PC-3 (cell line): ENCODE measurements at regions of chr10 and their contacts with region 1.

Region 1: GRCh38 chr10:78310481-78311080 is 276.9 kb downstream of the RPS24 start:
- DNase-seq: no peak
- ATAC-seq: no peak
- H3K4me3 ChIP-seq: no peak overlapping the region
- H3K27ac ChIP-seq: no peak overlapping the region
- H3K4me1 ChIP-seq: no peaks in the 10 kb centered on the region
- H3K27me3 ChIP-seq: peaks cover 68% of the 10 kb centered on the region
- CTCF ChIP-seq: no peak

Region 2: GRCh38 chr10:78211561-78212051 is 99.0 kb before region 1 on chr10:
- CTCF ChIA-PET with region 1: interaction called, 3 read pairs
- POLR2A ChIA-PET with region 1: no interaction called
- intact Hi-C with region 1: loop called (anchors 1 kb)
- DNase-seq: peak; percentile 92
- ATAC-seq: peak; percentile 66
- H3K4me3 ChIP-seq: no peak overlapping the region
- H3K27ac ChIP-seq: no peak overlapping the region
- H3K4me1 ChIP-seq: no peaks in the 10 kb centered on the region
- H3K27me3 ChIP-seq: peaks cover 69% of the 10 kb centered on the region
- CTCF ChIP-seq: peak; percentile 100

Region 3: DNA sequence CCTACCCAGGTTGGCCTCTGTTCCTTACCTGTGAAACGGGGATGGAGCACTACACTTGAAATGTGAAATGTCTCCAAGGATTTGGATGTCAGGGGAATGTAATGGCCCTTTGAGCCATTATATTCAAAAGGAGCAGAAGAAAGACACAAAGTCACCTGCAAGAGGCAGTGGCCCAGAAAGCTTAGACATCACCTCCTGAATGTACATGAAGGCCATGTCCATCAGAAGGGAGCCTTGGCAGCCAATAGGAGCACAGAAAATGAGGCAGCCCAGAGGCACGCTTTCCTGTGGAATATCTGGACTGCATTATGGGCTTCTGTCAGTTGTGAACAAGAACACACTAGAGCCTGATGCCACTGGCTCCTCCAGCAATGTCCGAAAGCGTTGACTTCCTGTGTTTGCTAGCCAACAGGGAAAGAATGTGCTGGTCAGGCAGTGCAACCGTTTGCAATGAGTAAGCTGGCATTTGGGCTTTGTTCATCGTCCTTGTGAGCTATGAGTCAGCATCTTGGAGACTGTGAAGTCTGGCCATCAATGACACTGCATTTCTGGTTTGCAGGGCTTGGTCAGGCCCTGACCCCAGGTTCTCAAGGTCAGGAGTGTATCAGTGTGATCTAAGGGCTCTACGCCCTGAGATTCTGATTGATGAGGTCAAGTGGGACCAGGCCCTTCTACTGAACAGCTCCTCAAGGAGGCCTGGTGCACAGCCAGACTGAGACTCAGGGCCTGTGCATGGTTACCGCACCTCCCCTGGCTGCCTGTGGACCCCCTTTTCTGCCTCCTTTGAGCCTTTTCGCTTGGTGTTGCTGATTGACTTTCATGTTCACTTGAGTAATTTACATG is 54.6 kb before region 1 on chr10:
- CTCF ChIA-PET with region 1: no interaction called
- POLR2A ChIA-PET with region 1: no interaction called
- intact Hi-C with region 1: no loop called
- DNase-seq: peak; percentile 100
- ATAC-seq: peak; percentile 97
- H3K4me3 ChIP-seq: no peak overlapping the region
- H3K27ac ChIP-seq: peak overlapping the region; percentile 73
- H3K4me1 ChIP-seq: peaks cover 20% of the 10 kb centered on the region
- H3K27me3 ChIP-seq: no peaks in the 10 kb centered on the region
- CTCF ChIP-seq: no peak

Region 4: DNA sequence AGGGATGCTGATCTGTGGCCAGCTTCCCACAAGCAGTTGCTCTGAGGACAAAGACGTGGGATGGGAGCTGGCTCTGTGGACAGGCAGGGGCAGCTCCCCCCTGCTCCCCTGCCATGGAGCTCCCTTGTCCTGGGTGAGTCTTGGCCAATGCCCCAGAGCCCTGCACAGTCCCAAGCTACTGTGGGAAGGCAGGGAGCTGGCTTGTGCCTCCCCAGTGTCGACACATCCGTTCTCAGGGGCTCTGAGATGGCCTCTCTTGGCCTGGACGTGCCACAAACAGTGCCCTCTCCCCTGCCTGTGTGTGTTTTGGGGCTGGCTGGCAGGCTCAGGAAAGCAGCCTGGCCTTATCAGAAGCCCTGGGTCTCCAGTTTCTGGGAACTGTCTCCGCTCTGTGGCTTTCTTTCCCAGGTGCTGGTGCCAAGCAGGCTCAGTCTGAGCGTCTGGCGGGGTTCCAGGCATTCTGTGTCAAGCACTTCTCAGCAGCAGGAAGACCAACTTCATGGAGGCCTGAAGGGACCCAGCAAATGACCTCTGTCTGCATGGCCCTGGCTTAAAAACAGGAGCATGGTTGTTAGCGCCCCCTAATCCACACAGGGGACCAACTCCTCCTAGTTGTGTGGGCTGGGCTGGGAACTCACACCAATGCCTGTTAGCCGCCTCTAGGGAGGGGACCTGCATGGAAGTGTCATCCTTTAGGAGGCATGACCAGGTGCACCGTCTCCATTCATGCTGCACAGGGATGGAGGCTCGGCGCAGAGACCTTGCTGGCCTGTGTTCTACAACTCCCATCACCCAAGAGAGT is 98.3 kb after region 1 on chr10:
- CTCF ChIA-PET with region 1: no interaction called
- POLR2A ChIA-PET with region 1: no interaction called
- intact Hi-C with region 1: no loop called
- DNase-seq: peak; percentile 61
- ATAC-seq: no peak
- H3K4me3 ChIP-seq: no peak overlapping the region
- H3K27ac ChIP-seq: no peak overlapping the region
- H3K4me1 ChIP-seq: peaks cover 13% of the 10 kb centered on the region
- H3K27me3 ChIP-seq: peaks cover 11% of the 10 kb centered on the region; the same call in 1 of the 2 replicates
- CTCF ChIP-seq: peak; percentile 33

Region 5: GRCh38 chr10:78623578-78624215 is 313.1 kb after region 1 on chr10:
- CTCF ChIA-PET with region 1: no interaction called
- POLR2A ChIA-PET with region 1: interaction called, 12 read pairs
- intact Hi-C with region 1: no loop called
- DNase-seq: peak; percentile 99
- ATAC-seq: peak; percentile 84
- H3K4me3 ChIP-seq: peak overlapping the region; percentile 10
- H3K27ac ChIP-seq: peak overlapping the region; percentile 82
- H3K4me1 ChIP-seq: peaks cover 37% of the 10 kb centered on the region
- H3K27me3 ChIP-seq: no peaks in the 10 kb centered on the region
- CTCF ChIP-seq: no peak